Dendritic cell treated with granulocyte-macrophage colony-stimulating factor and Interleukin-4, amounts not matched to agents 40 ng/mL and 50 ng/mL, for 4 days (primary cell): ENCODE measurements at regions of chr11 and their contacts with region 1.

Region 1: GRCh38 chr11:126310228-126310991 is 6.5 kb downstream of the DCPS start:
- H3K4me3 Mint-ChIP-seq: no peak overlapping the region
- H3K27ac Mint-ChIP-seq: no peak overlapping the region
- H3K4me1 Mint-ChIP-seq: peaks cover 60% of the 10 kb centered on the region
- H3K27me3 Mint-ChIP-seq: no peaks in the 10 kb centered on the region

Region 2: GRCh38 chr11:126172596-126173038 is 137.8 kb before region 1 on chr11:
- intact Hi-C with region 1: no loop called
- H3K4me3 Mint-ChIP-seq: no peak overlapping the region
- H3K27ac Mint-ChIP-seq: peak overlapping the region; percentile 29
- H3K4me1 Mint-ChIP-seq: peaks cover 17% of the 10 kb centered on the region
- H3K27me3 Mint-ChIP-seq: peaks cover 1% of the 10 kb centered on the region

Region 3: DNA sequence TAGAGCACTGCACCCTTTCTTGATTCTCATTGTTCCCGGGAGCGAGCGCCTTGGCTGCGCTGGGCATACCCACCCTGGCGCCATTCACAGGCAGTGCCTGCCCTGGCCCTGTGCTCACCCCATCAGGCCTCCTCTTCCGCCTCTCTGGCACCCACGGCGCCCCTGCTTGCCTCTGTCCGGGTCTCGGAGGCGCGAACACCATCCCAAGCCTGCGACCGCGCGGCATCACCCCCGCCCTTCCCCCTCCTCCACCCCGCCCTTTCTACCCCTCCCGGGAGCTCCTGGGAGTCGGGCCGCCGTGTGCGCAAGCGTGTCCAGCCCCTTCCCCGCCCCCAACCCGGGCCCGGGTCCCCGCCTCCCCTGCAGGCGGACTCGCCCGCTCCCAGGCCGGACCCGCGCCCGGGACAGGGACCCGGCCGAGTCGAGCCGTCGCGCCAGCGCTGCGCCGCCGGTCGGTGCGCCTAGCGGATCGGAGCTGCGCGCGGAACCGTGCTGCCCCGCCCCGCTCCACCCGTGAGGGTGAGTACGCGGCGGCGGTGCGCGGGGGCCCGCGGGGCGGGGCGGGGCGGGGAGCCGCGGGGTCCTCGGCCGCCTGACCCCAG is 45.0 kb after region 1 on chr11 and contains the start of gene ST3GAL4:
- intact Hi-C with region 1: loop called (anchors 5 kb)
- H3K4me3 Mint-ChIP-seq: peak within 1 kb of the TSS; percentile 88
- H3K27ac Mint-ChIP-seq: peak within 1 kb of the TSS; percentile 84
- H3K4me1 Mint-ChIP-seq: peaks cover 80% of the 10 kb centered on the region
- H3K27me3 Mint-ChIP-seq: no peaks in the 10 kb centered on the region

Region 4: DNA sequence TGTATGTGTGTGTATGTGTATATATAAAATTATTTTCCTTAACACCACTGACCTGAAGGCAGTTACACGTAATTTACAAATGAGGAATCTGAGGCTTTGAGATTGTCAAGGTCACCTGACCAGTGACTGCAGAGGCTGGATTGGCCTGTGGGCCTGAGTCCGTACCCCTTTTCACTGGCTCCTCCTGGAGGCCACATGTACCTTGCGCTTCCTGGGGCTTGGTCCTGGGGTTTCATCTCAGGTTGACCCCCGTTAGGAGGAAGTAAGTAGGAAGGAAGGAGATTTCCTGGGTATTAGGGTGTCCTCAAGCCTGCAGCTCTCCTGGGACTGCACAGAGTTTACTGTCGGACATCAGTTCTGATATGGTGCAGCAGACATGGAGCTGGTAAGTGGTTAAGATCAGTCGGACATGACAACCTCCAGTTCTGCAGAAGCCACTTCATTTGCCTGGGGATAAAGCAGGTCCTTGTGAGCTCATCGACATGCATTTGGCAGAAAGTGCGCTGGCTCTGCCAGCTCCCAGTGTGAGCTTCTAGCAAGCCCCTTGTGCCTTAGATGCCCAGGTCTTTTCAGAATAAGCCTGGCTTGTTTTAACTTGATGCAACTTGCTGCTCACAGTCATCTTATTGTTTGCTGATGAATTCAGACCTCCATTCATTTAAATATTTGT is 81.7 kb after region 1 on chr11:
- intact Hi-C with region 1: loop called (anchors 2 kb)
- H3K4me3 Mint-ChIP-seq: no peak overlapping the region
- H3K27ac Mint-ChIP-seq: peak overlapping the region; percentile 71
- H3K4me1 Mint-ChIP-seq: peaks cover 41% of the 10 kb centered on the region
- H3K27me3 Mint-ChIP-seq: no peaks in the 10 kb centered on the region

Region 5: GRCh38 chr11:126440792-126441514 is 130.5 kb after region 1 on chr11:
- intact Hi-C with region 1: loop called (anchors 1 kb)
- H3K4me3 Mint-ChIP-seq: no peak overlapping the region
- H3K27ac Mint-ChIP-seq: no peak overlapping the region
- H3K4me1 Mint-ChIP-seq: peaks cover 7% of the 10 kb centered on the region
- H3K27me3 Mint-ChIP-seq: peaks cover 4% of the 10 kb centered on the region

Region 6: GRCh38 chr11:126480410-126481302 is 170.2 kb after region 1 on chr11:
- intact Hi-C with region 1: loop called (anchors 1 kb)
- H3K4me3 Mint-ChIP-seq: peak overlapping the region; percentile 27
- H3K27ac Mint-ChIP-seq: peak overlapping the region; percentile 54
- H3K4me1 Mint-ChIP-seq: peaks cover 16% of the 10 kb centered on the region
- H3K27me3 Mint-ChIP-seq: no peaks in the 10 kb centered on the region

Region 7: DNA sequence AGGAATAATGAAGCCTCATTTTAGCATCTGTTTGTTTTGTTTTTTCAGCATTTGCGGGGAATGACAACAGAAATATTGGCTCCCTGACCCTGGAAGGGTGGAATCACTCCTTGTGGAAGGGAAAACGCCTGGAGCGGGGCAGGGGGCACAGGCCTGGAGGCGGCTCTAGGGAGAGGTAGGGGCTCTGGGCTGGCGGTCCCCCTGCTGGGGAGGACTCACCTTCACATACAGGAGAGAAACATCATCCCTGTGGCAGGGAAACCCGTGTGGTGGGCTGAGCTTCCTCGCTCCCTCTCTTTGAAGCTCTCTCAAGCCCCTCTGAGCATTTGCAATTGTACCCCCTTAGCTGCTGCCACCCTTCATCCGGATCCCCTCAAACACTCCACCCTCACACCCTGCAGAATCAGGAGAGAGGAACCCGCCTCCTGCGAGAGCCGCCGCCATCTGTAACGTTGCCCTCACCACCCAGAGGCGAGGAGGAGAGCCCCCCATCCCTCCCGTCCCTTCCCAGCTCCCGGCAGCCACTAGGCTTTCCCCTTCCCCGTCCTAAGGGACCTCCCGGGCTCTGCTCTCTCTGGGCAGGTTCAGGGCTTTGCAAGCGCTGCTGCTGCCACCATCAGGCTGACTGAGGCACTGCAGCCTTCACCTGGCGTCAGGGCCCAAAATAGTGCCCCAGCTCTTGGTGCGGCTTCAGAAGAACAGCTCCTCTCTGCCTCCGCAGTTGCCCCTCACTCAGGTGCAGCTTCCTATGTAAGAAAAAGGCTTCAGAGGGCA is 679.7 kb after region 1 on chr11:
- intact Hi-C with region 1: loop called (anchors 2 kb)
- H3K4me3 Mint-ChIP-seq: no peak overlapping the region
- H3K27ac Mint-ChIP-seq: no peak overlapping the region
- H3K4me1 Mint-ChIP-seq: no peaks in the 10 kb centered on the region
- H3K27me3 Mint-ChIP-seq: peaks cover 33% of the 10 kb centered on the region